ENCODE measurements at regions of chr6 and their contacts with region 1.

Region 1: GRCh38 chr6:46983007-46983411 is 59.1 kb downstream of the ADGRF1 start:
- DNase-seq: no peak
- ATAC-seq: no peak
- H3K4me3 ChIP-seq: no peak overlapping the region
- H3K27ac ChIP-seq: no peak overlapping the region
- H3K4me1 ChIP-seq: peaks cover 0 to 18% (median 0%) of the 10 kb centered on the region in 12 donors
- H3K27me3 ChIP-seq: no peaks in the 10 kb centered on the region
- CTCF ChIP-seq: peak in 2 of 12 donors; percentile 8 to 31
- POLR2A ChIP-seq: no peak

Region 2: DNA sequence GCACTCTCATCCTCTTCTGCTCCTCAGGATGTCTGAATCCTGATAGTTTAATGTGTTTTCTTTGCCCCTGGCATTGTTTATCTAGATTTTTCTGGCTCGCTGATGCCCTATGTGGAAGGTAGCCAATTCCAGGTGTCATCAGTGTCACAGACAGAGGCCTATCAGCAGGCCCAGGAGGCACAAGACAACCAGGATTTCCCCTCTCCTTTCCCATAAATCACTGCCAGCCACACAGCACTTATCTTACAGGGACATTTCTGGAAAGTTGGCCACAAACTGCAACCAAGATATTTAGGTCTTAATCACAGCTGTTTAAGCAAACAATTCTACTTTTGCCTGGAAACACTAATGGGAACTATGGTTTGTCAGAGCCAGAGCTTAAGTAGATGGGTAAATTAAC is 89.4 kb before region 1 on chr6:
- intact Hi-C with region 1: loop called in 1 of 10 experiments (anchors 10 kb)
- DNase-seq: no peak
- ATAC-seq: peak in 1 of 4 donors; percentile 48
- H3K4me3 ChIP-seq: no peak overlapping the region
- H3K27ac ChIP-seq: peak overlapping the region in 2 of 12 donors; percentile 7 to 44
- H3K4me1 ChIP-seq: peaks cover 0 to 46% (median 24%) of the 10 kb centered on the region in 12 donors
- H3K27me3 ChIP-seq: no peaks in the 10 kb centered on the region
- CTCF ChIP-seq: no peak
- POLR2A ChIP-seq: no peak

Region 3: GRCh38 chr6:46932526-46933319 is 50.3 kb before region 1 on chr6:
- intact Hi-C with region 1: loop called in 2 of 10 experiments (anchors 10 kb)
- DNase-seq: no peak
- ATAC-seq: peak in 2 of 4 donors; percentile 13 to 55
- H3K4me3 ChIP-seq: no peak overlapping the region
- H3K27ac ChIP-seq: peak overlapping the region in 11 of 12 donors; percentile 21 to 83 (median 55)
- H3K4me1 ChIP-seq: peaks cover 0 to 45% (median 13%) of the 10 kb centered on the region in 12 donors
- H3K27me3 ChIP-seq: no peaks in the 10 kb centered on the region
- CTCF ChIP-seq: no peak
- POLR2A ChIP-seq: no peak

Measured in heart left ventricle (tissue), 16 donors.